ENCODE measurements at regions of chr14 and their contacts with region 1.

Region 1: DNA sequence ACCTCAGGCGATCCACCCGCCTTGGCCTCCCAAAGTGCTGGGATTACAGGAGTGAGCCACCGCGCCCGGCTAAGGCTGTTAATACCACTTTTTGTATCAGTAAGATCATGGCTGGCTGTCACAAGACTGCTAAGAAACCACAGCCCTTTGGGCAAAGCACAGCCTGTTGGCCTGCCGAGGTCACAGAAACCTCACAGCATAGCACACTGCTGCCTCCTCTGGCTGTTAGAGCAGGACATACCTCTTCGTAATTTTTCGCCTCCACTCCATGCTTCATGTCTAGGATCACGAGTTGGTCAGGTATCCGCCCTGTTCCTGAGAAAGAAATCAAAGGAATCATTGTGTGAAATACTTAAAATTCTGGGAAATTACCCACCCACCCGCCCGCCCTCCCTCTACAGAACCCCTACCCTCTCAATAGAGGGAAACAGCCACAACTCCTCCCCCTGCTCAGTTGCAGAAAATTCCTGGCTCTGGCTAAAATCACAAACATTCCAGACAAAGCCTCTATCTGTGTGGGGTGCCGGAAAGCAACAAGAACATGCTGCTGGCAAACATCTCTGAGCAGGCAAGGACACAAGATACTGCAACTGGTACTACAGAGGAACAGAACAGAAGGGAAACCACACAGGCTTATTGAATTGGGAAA is 20.7 kb upstream of the NEK9 start:
- DNase-seq: peak; percentile 62 to 78 (median 72)
- H3K4me3 ChIP-seq: no peak overlapping the region
- H3K27ac ChIP-seq: peak overlapping the region; percentile 78 to 87
- H3K4me1 ChIP-seq: peaks cover 20% of the 10 kb centered on the region
- H3K27me3 ChIP-seq: no peaks in the 10 kb centered on the region
- CTCF ChIP-seq: peak in 2 of 3 donors; percentile 47 to 61
- EP300 ChIP-seq: peak; percentile 21
- POLR2A ChIP-seq: peak; percentile 16

Region 2: DNA sequence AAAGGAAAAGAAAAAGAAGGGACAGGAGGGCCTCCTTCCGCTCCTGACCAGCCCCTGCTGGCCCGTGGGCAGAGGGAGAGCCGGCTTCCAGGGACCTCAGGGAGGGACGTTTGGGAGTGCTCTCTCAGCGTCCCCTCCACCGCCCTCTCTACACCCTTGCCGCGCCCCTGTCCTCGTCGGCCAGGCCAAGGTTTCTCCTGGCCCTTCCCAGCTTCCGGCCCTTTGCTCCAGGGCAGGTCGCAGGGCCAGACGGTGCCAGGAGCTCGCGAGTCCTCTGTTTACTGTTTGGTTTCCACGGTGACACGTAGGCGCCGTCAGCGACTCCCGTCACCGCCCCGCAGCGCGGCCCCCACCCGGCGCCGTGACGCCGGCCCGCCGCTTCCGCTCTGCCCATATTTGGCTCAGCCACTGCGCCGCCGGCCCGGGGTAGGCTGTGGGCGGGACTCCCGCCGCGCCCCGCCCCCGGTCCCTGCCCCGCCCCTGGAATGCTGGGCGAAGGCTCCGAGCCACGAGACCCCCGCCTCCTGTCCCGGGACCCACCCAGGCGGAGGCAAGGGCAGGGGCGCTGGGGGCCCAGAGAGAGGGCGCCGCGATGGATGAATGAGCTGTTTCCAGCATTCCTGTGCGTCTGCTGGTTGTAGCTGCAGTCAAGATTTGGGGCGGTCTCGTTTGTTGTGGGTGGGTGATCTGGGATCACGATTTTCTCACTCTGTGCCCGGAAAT is 146.5 kb after region 1 on chr14:
- intact Hi-C with region 1: loop called in 1 of 4 experiments (anchors 5 kb)
- DNase-seq: peak; percentile 94 to 97 (median 97)
- H3K4me3 ChIP-seq: peak overlapping the region; percentile 74
- H3K27ac ChIP-seq: peak overlapping the region; percentile 77 to 85
- H3K4me1 ChIP-seq: peaks cover 14% of the 10 kb centered on the region
- H3K27me3 ChIP-seq: no peaks in the 10 kb centered on the region
- CTCF ChIP-seq: peak in 1 of 3 donors; percentile 10
- EP300 ChIP-seq: peak; percentile 86
- POLR2A ChIP-seq: peak; percentile 50

Region 3: DNA sequence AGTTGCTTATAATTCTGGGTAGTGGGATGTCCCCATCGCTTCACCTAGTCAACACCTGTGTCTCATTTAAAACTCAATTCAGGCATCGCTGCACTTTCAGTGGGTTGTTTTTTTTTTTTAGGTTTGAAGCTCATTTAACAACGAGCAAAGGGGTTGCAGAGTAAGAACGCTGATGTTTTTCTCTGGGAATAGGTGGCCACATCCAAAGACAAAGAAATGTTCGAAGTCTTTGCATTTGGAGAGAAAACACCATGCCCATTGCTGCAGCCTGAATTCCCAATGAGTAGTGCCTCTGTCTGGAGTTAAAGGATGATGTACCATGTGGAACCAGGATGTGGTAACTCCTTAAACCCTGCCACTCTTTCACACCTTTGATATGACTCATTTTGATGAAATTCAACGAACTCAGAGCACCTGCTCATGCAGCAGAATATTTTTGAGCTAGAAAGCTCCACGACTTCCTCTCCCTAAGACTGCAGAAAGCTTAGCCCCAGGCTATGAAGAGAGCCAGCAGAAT is 339.7 kb after region 1 on chr14:
- intact Hi-C with region 1: loop called in 1 of 4 experiments (anchors 10 kb)
- DNase-seq: no peak
- H3K4me3 ChIP-seq: no peak overlapping the region
- H3K27ac ChIP-seq: no peak overlapping the region
- H3K4me1 ChIP-seq: no peaks in the 10 kb centered on the region
- H3K27me3 ChIP-seq: no peaks in the 10 kb centered on the region
- CTCF ChIP-seq: no peak
- EP300 ChIP-seq: no peak
- POLR2A ChIP-seq: no peak

Measured in ovary (tissue), 10 donors.